Naive thymus-derived CD4-positive, alpha-beta T cell (primary cell): ENCODE measurements at regions of chr16 and their contacts with region 1.

Region 1: DNA sequence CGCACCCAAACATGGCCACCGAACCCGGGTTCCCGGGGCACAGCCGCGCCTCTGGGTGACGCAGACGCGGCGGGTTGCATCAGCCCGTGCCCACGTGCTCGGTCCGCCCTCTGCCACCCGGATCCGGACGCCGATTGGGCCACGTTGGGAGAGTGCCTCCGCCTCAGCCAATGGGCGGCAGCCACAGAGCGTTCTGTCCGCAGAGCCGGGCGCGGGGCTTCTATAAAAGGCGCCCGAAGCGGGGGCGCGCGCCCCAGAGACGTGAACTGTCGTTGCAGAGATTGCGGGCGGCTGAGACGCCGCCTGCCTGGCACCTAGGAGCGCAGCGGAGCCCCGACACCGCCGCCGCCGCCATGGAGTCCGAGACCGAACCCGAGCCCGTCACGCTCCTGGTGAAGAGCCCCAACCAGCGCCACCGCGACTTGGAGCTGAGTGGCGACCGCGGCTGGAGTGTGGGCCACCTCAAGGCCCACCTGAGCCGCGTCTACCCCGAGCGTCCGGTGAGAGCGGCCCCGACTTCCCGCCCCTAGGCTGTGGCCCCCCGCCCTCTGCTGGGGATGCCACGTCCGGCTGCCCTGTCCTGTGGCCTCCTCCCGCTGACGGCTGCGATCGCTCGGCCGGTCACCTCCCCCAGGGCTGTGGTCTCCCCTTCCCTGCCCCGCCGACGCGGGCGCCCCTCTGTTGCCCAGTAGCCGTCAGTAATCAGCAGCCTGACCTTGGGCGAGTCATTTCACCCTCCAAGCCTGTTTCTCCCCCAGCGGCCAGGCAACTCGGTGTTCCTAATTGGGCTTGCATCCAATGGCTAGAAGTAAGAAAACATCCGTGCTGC is at the start of gene HERPUD1:
- DNase-seq: peak; percentile 96 to 99 (median 99)
- ATAC-seq: peak; percentile 96
- H3K4me3 ChIP-seq: peak within 1 kb of the TSS; percentile 94
- H3K4me3 Mint-ChIP-seq: peak within 1 kb of the TSS; percentile 97 to 99 (median 98)
- H3K27ac ChIP-seq: peak within 1 kb of the TSS; percentile 98
- H3K27ac Mint-ChIP-seq: peak within 1 kb of the TSS; percentile 96 to 99 (median 97)
- H3K4me1 ChIP-seq: peaks cover 13 to 18% of the 10 kb centered on the region in 2 donors
- H3K4me1 Mint-ChIP-seq: peaks cover 18 to 52% (median 38%) of the 10 kb centered on the region in 7 donors
- H3K27me3 ChIP-seq: no peaks in the 10 kb centered on the region
- H3K27me3 Mint-ChIP-seq: no peaks in the 10 kb centered on the region
- total RNA-seq, gene HERPUD1: 102 to 226 (median 131) TPM

Region 2: GRCh38 chr16:56450986-56451752 is 480.9 kb before region 1 on chr16 and contains the starts of genes NUDT21 and OGFOD1:
- CTCF ChIA-PET with region 1: no interaction called
- POLR2A ChIA-PET with region 1: no interaction called
- intact Hi-C with region 1: loop called (anchors 2 to 5 kb)
- DNase-seq: peak; percentile 67 to 96 (median 93)
- ATAC-seq: peak; percentile 99
- H3K4me3 ChIP-seq: peak within 1 kb of the TSS; percentile 96
- H3K4me3 Mint-ChIP-seq: peak within 1 kb of the TSS; percentile 94 to 100 (median 97)
- H3K27ac ChIP-seq: peak within 1 kb of the TSS; percentile 92
- H3K27ac Mint-ChIP-seq: peak within 1 kb of the TSS; percentile 92 to 98 (median 93)
- H3K4me1 ChIP-seq: peaks cover 24 to 42% of the 10 kb centered on the region in 2 donors
- H3K4me1 Mint-ChIP-seq: peaks cover 50 to 77% (median 64%) of the 10 kb centered on the region in 7 donors
- H3K27me3 ChIP-seq: no peaks in the 10 kb centered on the region
- H3K27me3 Mint-ChIP-seq: no peaks in the 10 kb centered on the region
- total RNA-seq, gene NUDT21: 74.0 to 191 (median 97.5) TPM
- total RNA-seq, gene OGFOD1: 23.8 to 51.8 (median 42.1) TPM

Region 3: GRCh38 chr16:56681939-56682702 is 250.0 kb before region 1 on chr16 and contains the start of gene MT1X:
- CTCF ChIA-PET with region 1: no interaction called
- POLR2A ChIA-PET with region 1: no interaction called
- intact Hi-C with region 1: loop called in 1 of 2 experiments (anchors 5 kb)
- DNase-seq: peak; percentile 77 to 94 (median 88)
- ATAC-seq: peak; percentile 100
- H3K4me3 ChIP-seq: peak within 1 kb of the TSS; percentile 93
- H3K4me3 Mint-ChIP-seq: peak within 1 kb of the TSS; percentile 86 to 99 (median 96)
- H3K27ac ChIP-seq: peak within 1 kb of the TSS; percentile 81
- H3K27ac Mint-ChIP-seq: peak within 1 kb of the TSS; percentile 89 to 99 (median 95)
- H3K4me1 ChIP-seq: peaks cover 13 to 15% of the 10 kb centered on the region in 2 donors
- H3K4me1 Mint-ChIP-seq: peaks cover 0 to 28% (median 25%) of the 10 kb centered on the region in 7 donors
- H3K27me3 ChIP-seq: no peaks in the 10 kb centered on the region
- H3K27me3 Mint-ChIP-seq: peaks cover 0 to 2% (median 0%) of the 10 kb centered on the region in 5 donors
- total RNA-seq, gene MT1X: 15.0 to 70.7 (median 25.9) TPM

Region 4: DNA sequence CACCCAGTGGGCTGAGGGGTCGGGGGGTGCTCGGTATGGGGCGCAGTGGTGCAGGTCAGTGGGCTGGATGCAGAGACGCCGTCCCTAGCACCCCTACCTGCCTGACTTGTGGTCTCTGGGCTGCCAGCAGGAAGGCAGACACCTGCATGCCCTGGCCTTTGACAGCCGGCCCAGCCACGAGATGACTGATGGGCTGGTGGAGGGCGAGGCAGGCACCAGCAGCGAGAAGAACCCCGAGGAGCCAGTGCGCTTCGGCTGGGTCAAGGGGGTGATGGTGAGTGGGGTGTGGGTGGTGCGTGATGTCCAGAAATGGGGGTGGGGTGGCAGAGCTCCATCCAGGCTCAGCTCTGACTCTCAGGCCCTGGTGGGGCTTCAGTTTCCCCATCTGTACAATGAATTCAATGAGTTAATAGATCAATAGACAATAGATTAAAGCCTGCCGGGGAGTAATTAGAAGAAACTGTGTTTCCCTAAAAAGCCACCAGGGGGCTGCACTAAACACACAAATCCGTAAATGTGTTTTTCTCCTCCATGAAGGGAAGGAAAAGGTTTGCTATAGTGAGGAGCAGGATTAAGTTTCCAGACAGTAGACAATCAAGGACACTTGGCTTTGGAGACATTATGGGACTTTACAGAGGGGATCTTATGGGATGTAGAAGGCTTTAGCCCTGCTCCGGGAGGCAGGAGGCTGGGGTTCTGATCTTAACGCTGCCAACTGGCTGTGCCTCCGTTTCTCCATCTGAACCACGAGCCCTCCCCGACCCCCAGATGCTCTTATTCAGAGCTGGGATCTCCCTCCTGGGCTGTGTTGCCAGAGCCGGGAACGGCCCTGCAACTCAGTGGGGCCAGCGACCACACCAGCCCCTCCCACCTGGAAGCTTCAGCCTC is 64.9 kb before region 1 on chr16:
- CTCF ChIA-PET with region 1: interaction called, 4 read pairs
- POLR2A ChIA-PET with region 1: interaction called, 9 read pairs
- intact Hi-C with region 1: loop called (anchors 1 kb)
- DNase-seq: peak in 7 of 9 donors; percentile 45 to 68 (median 56)
- ATAC-seq: peak; percentile 55
- H3K4me3 ChIP-seq: no peak overlapping the region
- H3K4me3 Mint-ChIP-seq: no peak overlapping the region
- H3K27ac ChIP-seq: no peak overlapping the region
- H3K27ac Mint-ChIP-seq: peak overlapping the region in 2 of 9 donors; percentile 70 to 82
- H3K4me1 ChIP-seq: peaks cover 0 to 14% of the 10 kb centered on the region in 2 donors
- H3K4me1 Mint-ChIP-seq: peaks cover 0 to 19% (median 16%) of the 10 kb centered on the region in 7 donors
- H3K27me3 ChIP-seq: no peaks in the 10 kb centered on the region
- H3K27me3 Mint-ChIP-seq: no peaks in the 10 kb centered on the region

Region 5: GRCh38 chr16:56950881-56951771 is 19.0 kb after region 1 on chr16:
- CTCF ChIA-PET with region 1: interaction called, 6 read pairs
- POLR2A ChIA-PET with region 1: interaction called, 32 read pairs
- intact Hi-C with region 1: loop called in 1 of 2 experiments (anchors 2 kb)
- DNase-seq: peak in 7 of 9 donors; percentile 20 to 62 (median 39)
- ATAC-seq: peak; percentile 81
- H3K4me3 ChIP-seq: no peak overlapping the region
- H3K4me3 Mint-ChIP-seq: no peak overlapping the region
- H3K27ac ChIP-seq: no peak overlapping the region
- H3K27ac Mint-ChIP-seq: peak overlapping the region in 5 of 9 donors; percentile 5 to 84 (median 16)
- H3K4me1 ChIP-seq: no peaks in the 10 kb centered on the region
- H3K4me1 Mint-ChIP-seq: peaks cover 0 to 18% (median 7%) of the 10 kb centered on the region in 7 donors
- H3K27me3 ChIP-seq: no peaks in the 10 kb centered on the region
- H3K27me3 Mint-ChIP-seq: no peaks in the 10 kb centered on the region

Region 6: DNA sequence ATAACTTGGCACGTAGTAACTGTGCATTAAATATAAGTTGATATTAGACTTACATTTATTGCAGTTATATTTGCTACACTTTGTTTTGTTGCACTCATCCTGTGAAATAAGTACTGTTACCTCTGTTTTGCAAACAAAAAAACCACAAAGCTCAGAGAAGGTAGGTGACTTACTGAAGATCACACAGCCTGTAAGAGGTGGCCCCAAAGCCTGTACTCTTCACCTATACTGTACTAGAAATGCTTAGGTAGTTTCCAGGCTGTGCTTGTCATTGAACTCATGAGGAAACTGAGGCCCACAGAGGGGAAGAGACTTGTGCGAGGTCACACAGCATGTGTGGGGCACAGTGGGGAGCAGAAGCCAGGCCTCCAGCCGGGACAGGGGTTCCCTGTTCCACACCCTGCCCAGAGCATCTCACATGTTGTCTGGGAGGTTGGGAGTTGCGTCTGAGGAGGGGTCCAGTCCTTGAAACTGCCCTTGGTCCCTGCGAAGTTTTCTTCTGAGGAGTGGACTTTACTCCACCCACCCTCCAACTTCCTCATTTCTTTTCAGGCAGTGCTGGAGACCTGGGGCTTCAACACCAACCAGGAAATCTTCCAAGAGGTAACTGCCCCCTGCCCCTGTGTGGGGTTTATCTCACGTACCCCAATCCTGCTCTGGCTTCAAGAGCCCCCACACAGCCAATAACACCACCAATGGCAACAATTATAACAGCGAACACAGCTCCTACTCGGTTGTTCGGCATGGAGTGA is 42.6 kb after region 1 on chr16:
- CTCF ChIA-PET with region 1: no interaction called
- POLR2A ChIA-PET with region 1: no interaction called
- intact Hi-C with region 1: no loop called
- DNase-seq: no peak
- ATAC-seq: peak; percentile 41
- H3K4me3 ChIP-seq: no peak overlapping the region
- H3K4me3 Mint-ChIP-seq: peak overlapping the region in 3 of 10 donors; percentile 12 to 36 (median 26)
- H3K27ac ChIP-seq: no peak overlapping the region
- H3K27ac Mint-ChIP-seq: peak overlapping the region in 4 of 9 donors; percentile 38 to 84 (median 64)
- H3K4me1 ChIP-seq: peaks cover 9 to 16% of the 10 kb centered on the region in 2 donors
- H3K4me1 Mint-ChIP-seq: peaks cover 19 to 48% (median 43%) of the 10 kb centered on the region in 7 donors
- H3K27me3 ChIP-seq: no peaks in the 10 kb centered on the region
- H3K27me3 Mint-ChIP-seq: no peaks in the 10 kb centered on the region

Region 7: GRCh38 chr16:57039148-57039812 is 107.2 kb after region 1 on chr16:
- CTCF ChIA-PET with region 1: no interaction called
- POLR2A ChIA-PET with region 1: interaction called, 10 read pairs
- intact Hi-C with region 1: no loop called
- DNase-seq: peak in 7 of 9 donors; percentile 27 to 50 (median 37)
- ATAC-seq: peak; percentile 24
- H3K4me3 ChIP-seq: peak overlapping the region; percentile 45
- H3K4me3 Mint-ChIP-seq: peak overlapping the region; percentile 55 to 95 (median 76)
- H3K27ac ChIP-seq: peak overlapping the region; percentile 72
- H3K27ac Mint-ChIP-seq: peak overlapping the region; percentile 88 to 99 (median 93)
- H3K4me1 ChIP-seq: peaks cover 82 to 94% of the 10 kb centered on the region in 2 donors
- H3K4me1 Mint-ChIP-seq: peaks cover 66 to 99% (median 86%) of the 10 kb centered on the region in 7 donors
- H3K27me3 ChIP-seq: no peaks in the 10 kb centered on the region
- H3K27me3 Mint-ChIP-seq: no peaks in the 10 kb centered on the region

Region 8: DNA sequence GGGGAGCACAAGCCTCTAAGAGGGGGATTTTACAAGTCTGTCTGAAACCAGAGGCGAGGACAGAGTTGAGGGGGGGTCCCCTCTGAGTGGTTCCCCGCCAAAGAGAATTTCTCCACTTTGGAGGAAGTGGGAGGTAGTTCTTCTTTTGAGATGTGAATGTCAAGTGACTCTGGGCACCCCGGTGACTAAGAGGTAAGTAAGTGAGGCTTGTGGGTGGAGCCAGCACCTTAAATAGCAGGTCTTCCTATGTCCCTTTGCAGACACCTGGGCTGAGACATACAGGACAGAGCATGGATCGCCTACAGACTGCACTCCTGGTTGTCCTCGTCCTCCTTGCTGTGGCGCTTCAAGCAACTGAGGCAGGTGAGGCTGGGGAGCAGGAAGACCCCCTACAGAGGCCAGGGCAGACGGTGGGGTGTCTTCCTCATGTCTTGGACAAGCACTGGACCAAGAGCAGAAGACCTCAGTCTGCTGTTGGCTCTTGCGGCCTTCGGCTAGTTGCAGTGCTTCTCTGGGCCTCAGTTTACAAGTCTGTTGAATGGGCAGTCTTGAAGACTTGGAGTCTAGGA is 426.5 kb after region 1 on chr16 and contains the start of gene CCL22:
- CTCF ChIA-PET with region 1: no interaction called
- POLR2A ChIA-PET with region 1: no interaction called
- intact Hi-C with region 1: no loop called
- DNase-seq: no peak
- ATAC-seq: peak; percentile 34
- H3K4me3 ChIP-seq: no peak within 1 kb of the TSS
- H3K4me3 Mint-ChIP-seq: no peak within 1 kb of the TSS
- H3K27ac ChIP-seq: no peak within 1 kb of the TSS
- H3K27ac Mint-ChIP-seq: no peak within 1 kb of the TSS
- H3K4me1 ChIP-seq: no peaks in the 10 kb centered on the region
- H3K4me1 Mint-ChIP-seq: no peaks in the 10 kb centered on the region
- H3K27me3 ChIP-seq: no peaks in the 10 kb centered on the region
- H3K27me3 Mint-ChIP-seq: peaks cover 0 to 3% (median 0%) of the 10 kb centered on the region in 5 donors
- total RNA-seq, gene CCL22: 0.17 to 1.9 (median 0.48) TPM in 4 of 5 experiments, not detected in the other

Region 9: GRCh38 chr16:57535680-57536305 is 603.7 kb after region 1 on chr16:
- CTCF ChIA-PET with region 1: no interaction called
- POLR2A ChIA-PET with region 1: no interaction called
- intact Hi-C with region 1: loop called in 1 of 2 experiments (anchors 5 kb)
- DNase-seq: peak; percentile 77 to 94 (median 87)
- ATAC-seq: peak; percentile 95
- H3K4me3 ChIP-seq: peak overlapping the region; percentile 44
- H3K4me3 Mint-ChIP-seq: peak overlapping the region; percentile 77 to 89 (median 82)
- H3K27ac ChIP-seq: peak overlapping the region; percentile 93
- H3K27ac Mint-ChIP-seq: peak overlapping the region; percentile 82 to 96 (median 94)
- H3K4me1 ChIP-seq: peaks cover 54 to 60% of the 10 kb centered on the region in 2 donors
- H3K4me1 Mint-ChIP-seq: peaks cover 57 to 79% (median 74%) of the 10 kb centered on the region in 7 donors
- H3K27me3 ChIP-seq: no peaks in the 10 kb centered on the region
- H3K27me3 Mint-ChIP-seq: no peaks in the 10 kb centered on the region